Activated CD4-positive, alpha-beta T cell treated with anti-CD3 and anti-CD28 coated beads, Interleukin-2, amount 10 ng/mL, durations not matched to agents 24 days and 14 days (primary cell): ENCODE measurements at regions of chrX and their contacts with region 1.

Region 1: GRCh38 chrX:72181178-72182125 is at the start of gene PIN4:
- DNase-seq: peak; percentile 94
- H3K4me3 Mint-ChIP-seq: no peak within 1 kb of the TSS
- H3K27ac Mint-ChIP-seq: no peak within 1 kb of the TSS
- H3K4me1 Mint-ChIP-seq: peaks cover 4% of the 10 kb centered on the region
- H3K27me3 Mint-ChIP-seq: no peaks in the 10 kb centered on the region
- total RNA-seq, gene PIN4: 10.8 and 11.3 TPM in 2 replicates

Region 2: GRCh38 chrX:72100824-72101351 is 80.6 kb before region 1 on chrX:
- intact Hi-C with region 1: no loop called
- DNase-seq: peak; percentile 92
- H3K4me3 Mint-ChIP-seq: peak overlapping the region; percentile 53
- H3K27ac Mint-ChIP-seq: peak overlapping the region; percentile 69
- H3K4me1 Mint-ChIP-seq: peaks cover 32% of the 10 kb centered on the region
- H3K27me3 Mint-ChIP-seq: peaks cover 45% of the 10 kb centered on the region

Region 3: DNA sequence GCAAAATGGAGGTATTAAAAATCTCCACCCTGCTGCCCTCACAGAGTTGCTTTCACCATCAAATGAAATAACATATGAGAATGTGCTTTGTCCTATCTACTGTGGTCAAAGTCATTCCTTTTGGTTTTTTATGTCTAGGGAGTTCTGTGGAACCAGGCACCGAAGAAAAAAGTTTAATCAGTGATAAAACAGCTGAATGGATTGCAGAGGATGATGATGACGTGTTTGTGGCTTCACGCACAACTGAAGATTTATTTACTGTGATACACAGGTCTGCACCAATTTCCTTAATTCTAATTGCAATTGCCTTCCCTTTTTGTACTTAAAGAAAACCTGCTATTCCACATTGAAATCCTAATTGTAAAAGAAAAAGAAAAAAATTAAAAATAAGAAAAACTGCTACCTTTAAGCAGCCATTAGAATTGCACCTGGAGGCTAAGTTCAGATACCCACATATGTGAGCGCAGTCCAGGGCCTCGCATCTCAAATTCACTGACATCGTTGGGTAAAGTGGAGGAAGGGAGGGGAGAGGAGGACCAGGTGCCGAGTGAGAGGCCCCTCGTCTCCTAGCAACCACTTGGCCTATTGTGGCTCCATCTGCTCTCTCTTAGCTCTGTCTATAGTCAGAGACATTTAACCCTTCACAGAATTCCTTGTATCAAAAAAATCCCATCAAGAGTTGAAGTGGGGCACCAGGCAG is 39.2 kb before region 1 on chrX:
- intact Hi-C with region 1: loop called (anchors 5 kb)
- DNase-seq: no peak
- H3K4me3 Mint-ChIP-seq: peak overlapping the region; percentile 50
- H3K27ac Mint-ChIP-seq: no peak overlapping the region
- H3K4me1 Mint-ChIP-seq: peaks cover 19% of the 10 kb centered on the region
- H3K27me3 Mint-ChIP-seq: peaks cover 29% of the 10 kb centered on the region

Region 4: DNA sequence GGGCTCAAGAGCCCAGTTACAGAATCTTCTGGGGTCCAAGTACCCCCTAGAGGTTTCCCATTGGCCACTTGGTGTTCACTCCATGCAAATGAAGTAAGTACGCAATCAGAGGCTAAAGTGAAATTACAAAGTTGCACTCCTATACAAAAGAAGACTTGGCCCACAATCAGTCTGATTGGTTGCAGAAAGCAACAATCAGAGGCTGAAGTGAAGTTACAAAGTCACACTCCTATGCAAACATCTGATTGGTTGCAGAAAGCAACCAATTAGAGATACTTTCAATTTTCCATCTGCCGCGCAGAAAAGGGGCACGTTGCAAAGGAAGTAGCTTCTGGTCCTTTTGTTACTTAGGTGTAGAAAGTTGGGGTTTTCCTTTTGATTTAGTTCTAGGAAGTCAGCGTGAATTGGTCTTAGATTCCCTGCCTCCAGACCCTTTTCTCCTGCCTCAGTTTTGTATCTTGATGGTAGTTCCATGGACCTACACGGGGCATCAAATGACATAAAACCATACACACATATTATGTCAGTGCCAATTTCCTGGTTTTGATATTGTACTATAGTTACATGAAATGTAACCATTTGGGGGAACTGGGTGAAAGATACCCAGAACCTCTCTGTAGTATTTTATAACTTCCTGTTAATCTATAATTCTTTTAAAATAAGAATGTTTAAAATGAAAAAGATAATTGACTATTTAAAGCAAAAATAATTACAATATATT is 12.3 kb before region 1 on chrX:
- intact Hi-C with region 1: loop called (anchors 2 kb)
- DNase-seq: peak; percentile 79
- H3K4me3 Mint-ChIP-seq: peak overlapping the region; percentile 72
- H3K27ac Mint-ChIP-seq: peak overlapping the region; percentile 78
- H3K4me1 Mint-ChIP-seq: peaks cover 4% of the 10 kb centered on the region
- H3K27me3 Mint-ChIP-seq: no peaks in the 10 kb centered on the region

Region 5: DNA sequence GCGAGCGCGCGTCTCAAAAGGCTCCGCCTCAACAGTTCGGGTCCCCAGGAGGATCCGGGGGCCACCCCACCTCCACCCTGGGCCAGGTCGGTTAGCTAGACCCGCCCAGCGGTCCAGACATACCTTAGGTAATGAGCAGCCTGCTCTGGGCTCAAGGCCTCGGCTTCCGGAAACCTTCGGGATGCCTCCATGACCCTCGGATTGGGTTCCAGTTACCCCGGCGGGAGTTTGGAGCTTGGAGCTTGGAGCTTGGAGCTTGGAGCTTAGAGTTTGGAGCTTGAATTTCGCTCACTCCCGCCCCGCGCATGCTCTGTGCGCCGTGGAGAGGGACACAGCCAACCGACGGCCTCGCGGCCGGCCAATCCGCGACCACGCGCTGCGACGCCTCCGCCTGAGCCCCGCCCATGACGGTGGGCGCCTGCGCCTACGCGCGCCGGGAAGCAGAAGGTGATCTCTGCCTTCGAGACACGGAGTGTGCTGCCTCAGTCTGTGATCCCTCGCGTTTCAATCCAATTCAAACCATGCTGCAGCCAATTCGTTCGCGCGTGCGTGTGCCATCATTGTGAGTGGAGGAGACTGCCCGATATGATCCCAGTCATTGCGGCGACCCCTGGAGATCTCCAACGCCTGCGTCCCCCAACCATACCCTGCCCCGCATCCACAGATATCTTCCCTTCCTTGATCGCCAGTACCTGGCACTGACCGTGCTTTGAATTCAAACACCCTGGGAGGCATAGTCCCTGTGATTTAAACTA is 57.4 kb after region 1 on chrX and contains the start of gene ERCC6L:
- intact Hi-C with region 1: loop called (anchors 2 kb)
- DNase-seq: peak; percentile 96
- H3K4me3 Mint-ChIP-seq: peak within 1 kb of the TSS; percentile 84
- H3K27ac Mint-ChIP-seq: peak within 1 kb of the TSS; percentile 53
- H3K4me1 Mint-ChIP-seq: peaks cover 17% of the 10 kb centered on the region
- H3K27me3 Mint-ChIP-seq: no peaks in the 10 kb centered on the region
- total RNA-seq, gene ERCC6L: 8.1 and 8.3 TPM in 2 replicates

Region 6: GRCh38 chrX:72269671-72270251 is 88.3 kb after region 1 on chrX:
- intact Hi-C with region 1: loop called (anchors 10 kb)
- DNase-seq: peak; percentile 69
- H3K4me3 Mint-ChIP-seq: peak overlapping the region; percentile 67
- H3K27ac Mint-ChIP-seq: peak overlapping the region; percentile 91
- H3K4me1 Mint-ChIP-seq: peaks cover 31% of the 10 kb centered on the region
- H3K27me3 Mint-ChIP-seq: no peaks in the 10 kb centered on the region